H1 (cell line): ENCODE measurements at regions of chr9 and their contacts with region 1.

Region 1: GRCh38 chr9:89278997-89279739 is 31.8 kb upstream of the CKS2 start:
- DNase-seq: no peak
- H3K4me3 ChIP-seq: no peak overlapping the region
- H3K27ac ChIP-seq: no peak overlapping the region
- H3K4me1 ChIP-seq: no peaks in the 10 kb centered on the region
- H3K27me3 ChIP-seq: no peaks in the 10 kb centered on the region
- CTCF ChIP-seq: peak in 2 of 3 experiments; percentile 57 to 65; a peak in 2 of 4 replicates
- EP300 ChIP-seq: no peak
- POLR2A ChIP-seq: no peak
- RAD21 ChIP-seq: peak; percentile 76 to 79

Region 2: GRCh38 chr9:88953381-88954029 is 325.7 kb before region 1 on chr9:
- CTCF ChIA-PET with region 1: no interaction called
- POLR2A ChIA-PET with region 1: no interaction called
- DNase-seq: no peak
- H3K4me3 ChIP-seq: no peak overlapping the region
- H3K27ac ChIP-seq: no peak overlapping the region
- H3K4me1 ChIP-seq: peaks cover 0 to 4% (median 0%) of the 10 kb centered on the region in 4 experiments; a peak in 2 of 7 replicates
- H3K27me3 ChIP-seq: no peaks in the 10 kb centered on the region; a peak in 1 of 7 replicates
- CTCF ChIP-seq: no peak
- EP300 ChIP-seq: no peak
- POLR2A ChIP-seq: no peak
- RAD21 ChIP-seq: no peak

Region 3: DNA sequence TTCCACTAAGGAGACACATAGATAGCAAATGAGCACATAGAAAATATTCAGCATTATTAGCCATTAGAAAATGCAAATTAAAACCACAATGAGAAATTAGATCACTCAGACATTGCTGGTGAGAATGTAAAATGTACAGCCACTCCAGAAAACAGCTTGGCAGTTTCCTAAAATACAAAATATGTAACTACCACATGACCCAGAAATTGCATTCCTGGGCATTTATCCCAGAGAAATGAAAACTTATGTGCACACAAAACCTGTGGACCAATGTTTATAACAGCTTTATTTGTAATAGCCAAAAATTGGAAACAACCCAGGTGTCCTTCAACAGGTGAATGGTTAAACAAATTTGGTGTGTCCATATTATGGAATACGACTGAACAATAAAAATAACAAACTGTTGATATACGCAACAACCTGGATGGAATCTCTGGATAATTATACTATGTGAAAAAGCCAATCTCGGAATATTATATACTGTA is 65.7 kb before region 1 on chr9:
- CTCF ChIA-PET with region 1: no interaction called
- POLR2A ChIA-PET with region 1: no interaction called
- DNase-seq: no peak
- H3K4me3 ChIP-seq: no peak overlapping the region
- H3K27ac ChIP-seq: no peak overlapping the region
- H3K4me1 ChIP-seq: peaks cover 0 to 2% (median 0%) of the 10 kb centered on the region in 4 experiments; a peak in 1 of 7 replicates
- H3K27me3 ChIP-seq: no peaks in the 10 kb centered on the region
- CTCF ChIP-seq: no peak
- EP300 ChIP-seq: no peak
- POLR2A ChIP-seq: no peak
- RAD21 ChIP-seq: no peak

Region 4: DNA sequence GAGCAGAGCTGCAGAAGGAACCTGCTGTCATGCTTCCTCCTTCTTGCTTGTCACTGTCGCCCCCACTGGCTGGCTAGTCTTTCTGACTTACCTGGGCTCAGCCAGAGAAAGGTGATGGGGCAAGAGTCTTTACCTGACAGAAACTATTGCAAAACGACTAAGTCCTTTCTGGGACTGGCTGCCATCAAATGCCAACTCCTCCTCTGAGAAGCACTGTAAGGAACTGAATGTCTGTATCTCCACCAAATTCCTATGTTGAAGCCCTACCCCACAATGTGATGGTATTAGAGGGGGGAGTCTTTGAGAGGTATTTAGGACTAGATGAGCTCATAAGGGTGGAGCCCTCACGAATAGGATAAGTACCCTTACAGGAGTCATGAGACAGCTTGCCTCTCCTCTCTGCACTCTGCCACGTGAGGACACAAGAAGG is 42.1 kb before region 1 on chr9:
- CTCF ChIA-PET with region 1: interaction called, 12 read pairs
- POLR2A ChIA-PET with region 1: no interaction called
- DNase-seq: no peak
- H3K4me3 ChIP-seq: no peak overlapping the region
- H3K27ac ChIP-seq: no peak overlapping the region
- H3K4me1 ChIP-seq: no peaks in the 10 kb centered on the region
- H3K27me3 ChIP-seq: peaks cover 0 to 3% (median 2%) of the 10 kb centered on the region in 4 experiments; a peak in 4 of 7 replicates
- CTCF ChIP-seq: peak in 2 of 3 experiments; percentile 26 to 37; a peak in 2 of 4 replicates
- EP300 ChIP-seq: no peak
- POLR2A ChIP-seq: no peak
- RAD21 ChIP-seq: peak; percentile 41 to 50; a peak in 3 of 4 replicates

Region 5: GRCh38 chr9:89265214-89265613 is 14.0 kb before region 1 on chr9:
- CTCF ChIA-PET with region 1: interaction called, 12 read pairs
- POLR2A ChIA-PET with region 1: interaction called, 7 read pairs
- DNase-seq: no peak
- H3K4me3 ChIP-seq: no peak overlapping the region
- H3K27ac ChIP-seq: no peak overlapping the region
- H3K4me1 ChIP-seq: no peaks in the 10 kb centered on the region
- H3K27me3 ChIP-seq: no peaks in the 10 kb centered on the region; a peak in 1 of 7 replicates
- CTCF ChIP-seq: no peak
- EP300 ChIP-seq: no peak
- POLR2A ChIP-seq: no peak
- RAD21 ChIP-seq: no peak

Region 6: DNA sequence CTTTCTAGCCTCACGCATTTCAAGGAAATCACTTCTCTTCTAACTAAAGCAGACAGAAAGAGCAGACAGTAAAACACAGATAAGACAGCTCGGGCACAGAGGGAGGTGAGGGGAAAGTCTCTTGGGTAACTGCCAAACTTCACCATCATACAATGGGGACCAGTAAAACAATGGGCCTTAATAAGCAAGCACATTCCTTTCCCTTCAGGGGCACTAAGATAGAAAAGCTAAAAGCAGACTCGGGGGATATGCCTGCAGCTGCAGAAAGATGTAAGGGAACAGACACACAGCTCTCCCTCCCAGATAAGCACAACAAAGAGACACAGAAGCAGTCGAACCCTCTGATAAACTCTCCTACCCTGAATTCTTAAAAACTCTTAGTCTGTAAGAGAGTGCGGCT is 16.2 kb after region 1 on chr9:
- CTCF ChIA-PET with region 1: interaction called, 11 read pairs
- POLR2A ChIA-PET with region 1: no interaction called
- DNase-seq: no peak
- H3K4me3 ChIP-seq: peak overlapping the region in 1 of 4 experiments; percentile 20; a peak in 1 of 8 replicates
- H3K27ac ChIP-seq: no peak overlapping the region
- H3K4me1 ChIP-seq: no peaks in the 10 kb centered on the region; a peak in 2 of 7 replicates
- H3K27me3 ChIP-seq: no peaks in the 10 kb centered on the region
- CTCF ChIP-seq: no peak
- EP300 ChIP-seq: no peak
- POLR2A ChIP-seq: no peak
- RAD21 ChIP-seq: no peak

Region 7: GRCh38 chr9:89358985-89359384 is 79.8 kb after region 1 on chr9:
- CTCF ChIA-PET with region 1: no interaction called
- POLR2A ChIA-PET with region 1: no interaction called
- DNase-seq: no peak
- H3K4me3 ChIP-seq: no peak overlapping the region
- H3K27ac ChIP-seq: no peak overlapping the region
- H3K4me1 ChIP-seq: no peaks in the 10 kb centered on the region
- H3K27me3 ChIP-seq: no peaks in the 10 kb centered on the region
- CTCF ChIP-seq: no peak
- EP300 ChIP-seq: no peak
- POLR2A ChIP-seq: no peak
- RAD21 ChIP-seq: no peak